Activated CD8-positive, alpha-beta T cell treated with anti-CD3 and anti-CD28 coated beads for 36 hours (primary cell): ENCODE measurements at regions of chr12 and their contacts with region 1.

Region 1: DNA sequence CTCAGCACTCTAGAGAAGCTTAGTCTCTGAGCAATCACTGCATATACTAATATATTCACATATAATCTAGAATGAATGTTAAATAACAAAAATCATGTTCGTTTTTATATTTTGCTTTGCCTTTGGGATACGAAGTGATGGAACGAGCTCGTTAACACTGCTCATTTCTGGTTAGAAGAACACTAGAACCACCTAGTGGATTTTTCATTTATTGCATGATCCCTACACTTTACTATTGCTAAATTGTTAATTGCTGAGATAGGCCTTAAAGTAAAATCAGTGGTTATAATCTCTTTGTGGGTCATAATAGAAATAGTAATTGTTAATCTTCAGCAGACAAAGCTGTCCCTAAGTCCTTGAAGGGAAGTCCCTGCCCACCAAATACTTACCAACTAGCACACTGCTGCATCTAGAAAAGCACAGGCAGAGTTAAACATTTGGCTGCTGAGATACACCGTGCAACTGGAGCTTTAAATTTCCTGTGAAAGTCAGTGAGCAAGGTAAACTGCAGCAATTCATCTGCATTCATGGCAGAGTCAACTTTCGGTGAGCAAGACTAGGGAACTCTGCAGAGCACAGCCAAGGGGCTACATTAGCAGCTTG is 353.7 kb downstream of the APAF1 start:
- DNase-seq: no peak
- ATAC-seq: peak; percentile 79
- H3K4me3 Mint-ChIP-seq: no peak overlapping the region
- H3K27ac Mint-ChIP-seq: no peak overlapping the region
- H3K4me1 Mint-ChIP-seq: no peaks in the 10 kb centered on the region
- H3K27me3 Mint-ChIP-seq: peaks cover 4% of the 10 kb centered on the region
- CTCF ChIP-seq: peak; percentile 69

Region 2: DNA sequence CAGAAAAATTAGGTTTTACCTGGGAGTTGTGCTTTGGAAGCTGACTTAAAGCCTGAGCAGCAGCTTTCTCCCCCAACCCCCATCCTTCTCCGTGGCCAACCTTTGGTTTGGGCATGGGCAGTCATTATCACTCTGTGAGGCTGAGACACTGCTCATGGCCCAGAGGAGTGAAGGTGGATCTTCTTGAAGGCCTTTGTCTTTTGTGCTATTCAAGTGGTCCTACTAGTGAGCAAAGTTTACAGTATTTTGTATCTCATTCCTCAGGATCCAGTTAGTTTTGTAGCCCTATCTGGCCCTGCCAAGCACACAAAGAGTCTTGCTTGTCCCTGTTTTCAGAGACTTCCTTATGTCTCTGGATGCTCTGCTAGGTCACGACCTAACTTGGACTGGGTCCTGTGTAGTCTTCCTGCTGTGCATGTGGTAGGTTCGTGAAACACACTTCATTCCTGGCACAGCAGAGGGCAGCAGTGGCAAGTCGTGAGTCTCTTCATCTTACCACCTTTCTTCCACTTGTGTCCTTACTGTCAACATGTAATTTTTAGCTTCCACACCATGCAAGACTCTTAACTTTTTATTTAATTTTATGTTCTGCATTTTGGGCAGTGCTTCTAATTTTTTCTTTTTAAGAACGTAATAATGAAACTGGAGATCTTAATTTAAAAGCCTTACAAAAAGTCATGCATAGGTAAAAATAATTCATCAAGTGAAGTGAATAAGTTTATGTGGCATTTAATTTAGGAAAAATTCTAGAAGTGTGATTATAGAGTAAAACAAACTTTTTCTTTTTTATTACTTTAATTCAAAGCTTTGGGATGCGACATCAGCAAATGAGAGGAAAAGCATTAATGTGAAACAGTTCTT is 300.0 kb before region 1 on chr12:
- CTCF ChIA-PET with region 1: interaction called, 16 read pairs
- POLR2A ChIA-PET with region 1: no interaction called
- intact Hi-C with region 1: loop called (anchors 5 kb)
- DNase-seq: peak; percentile 66
- ATAC-seq: peak; percentile 94
- H3K4me3 Mint-ChIP-seq: no peak overlapping the region
- H3K27ac Mint-ChIP-seq: no peak overlapping the region
- H3K4me1 Mint-ChIP-seq: peaks cover 8% of the 10 kb centered on the region
- H3K27me3 Mint-ChIP-seq: no peaks in the 10 kb centered on the region
- CTCF ChIP-seq: peak; percentile 65

Region 3: GRCh38 chr12:98725476-98726247 is 273.1 kb before region 1 on chr12:
- CTCF ChIA-PET with region 1: interaction called, 10 read pairs
- POLR2A ChIA-PET with region 1: no interaction called
- intact Hi-C with region 1: no loop called
- DNase-seq: peak; percentile 81
- ATAC-seq: peak; percentile 98
- H3K4me3 Mint-ChIP-seq: no peak overlapping the region
- H3K27ac Mint-ChIP-seq: no peak overlapping the region
- H3K4me1 Mint-ChIP-seq: peaks cover 2% of the 10 kb centered on the region
- H3K27me3 Mint-ChIP-seq: no peaks in the 10 kb centered on the region
- CTCF ChIP-seq: peak; percentile 69

Region 4: DNA sequence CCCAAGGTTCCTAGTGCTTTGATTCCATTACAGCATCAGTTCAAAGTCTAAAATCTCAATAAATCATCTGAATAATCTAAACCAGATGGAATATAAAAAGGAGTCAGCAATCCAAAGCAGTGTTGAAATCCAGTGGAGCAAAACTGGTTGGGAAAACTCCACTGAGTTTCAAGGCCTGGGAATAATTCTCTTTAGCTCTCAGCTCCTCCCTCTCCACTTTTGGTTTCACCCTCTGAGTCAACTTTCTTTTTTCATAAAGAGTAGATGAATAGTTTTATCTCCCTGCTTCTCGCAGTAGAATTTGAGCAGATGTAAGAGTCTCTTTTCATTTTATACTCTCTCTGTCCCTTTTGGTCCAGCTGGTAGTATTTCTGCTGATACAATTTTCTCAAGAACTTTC is 15.2 kb before region 1 on chr12:
- CTCF ChIA-PET with region 1: no interaction called
- POLR2A ChIA-PET with region 1: no interaction called
- intact Hi-C with region 1: no loop called
- DNase-seq: no peak
- ATAC-seq: no peak
- H3K4me3 Mint-ChIP-seq: no peak overlapping the region
- H3K27ac Mint-ChIP-seq: no peak overlapping the region
- H3K4me1 Mint-ChIP-seq: no peaks in the 10 kb centered on the region
- H3K27me3 Mint-ChIP-seq: no peaks in the 10 kb centered on the region
- CTCF ChIP-seq: no peak

Region 5: DNA sequence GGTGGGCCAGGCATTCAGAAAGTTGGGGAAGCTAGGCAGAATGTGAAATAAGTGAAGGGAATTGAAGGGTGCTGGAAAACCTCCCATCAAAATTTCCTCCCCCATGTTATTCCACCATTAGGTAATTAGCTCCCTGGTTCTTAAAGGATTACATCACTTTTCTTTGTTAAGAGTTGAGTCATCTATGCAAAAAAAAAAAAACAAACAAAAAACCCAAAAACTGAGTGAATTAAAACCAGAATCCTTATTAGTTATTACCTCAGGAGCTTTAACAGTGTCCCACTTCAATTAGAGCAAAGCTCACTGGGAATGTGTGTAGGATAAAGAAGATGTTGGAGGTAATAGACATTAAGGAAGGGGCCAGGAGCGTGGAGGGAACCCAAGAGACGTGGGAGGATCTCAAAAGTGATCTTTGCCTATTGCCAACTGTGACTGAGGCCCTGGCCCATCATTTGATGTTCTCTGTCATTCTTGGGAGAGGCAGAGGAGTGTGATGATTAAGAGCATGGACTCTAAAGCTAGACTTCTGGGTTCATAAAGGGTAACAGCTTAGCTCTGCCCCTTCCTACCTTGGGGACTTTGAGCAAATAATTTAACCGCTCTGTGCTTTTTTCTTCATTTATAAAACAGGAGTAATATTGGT is 11.0 kb after region 1 on chr12:
- CTCF ChIA-PET with region 1: interaction called, 11 read pairs
- POLR2A ChIA-PET with region 1: no interaction called
- intact Hi-C with region 1: no loop called
- DNase-seq: no peak
- ATAC-seq: no peak
- H3K4me3 Mint-ChIP-seq: no peak overlapping the region
- H3K27ac Mint-ChIP-seq: no peak overlapping the region
- H3K4me1 Mint-ChIP-seq: no peaks in the 10 kb centered on the region
- H3K27me3 Mint-ChIP-seq: peaks cover 6% of the 10 kb centered on the region
- CTCF ChIP-seq: no peak